Activated T-helper 2 cell treated with anti-CD3 and anti-CD28 coated beads, Interferon-gamma antibody, Interleukin-2, Interleukin-4, amounts not matched to agents 10 μg/mL and 5 μg/mL and 100 μg/mL, durations not matched to agents 14 hours and 24 hours and 36 hours (primary cell): ENCODE measurements at regions of chr18 and their contacts with region 1.

Region 1: DNA sequence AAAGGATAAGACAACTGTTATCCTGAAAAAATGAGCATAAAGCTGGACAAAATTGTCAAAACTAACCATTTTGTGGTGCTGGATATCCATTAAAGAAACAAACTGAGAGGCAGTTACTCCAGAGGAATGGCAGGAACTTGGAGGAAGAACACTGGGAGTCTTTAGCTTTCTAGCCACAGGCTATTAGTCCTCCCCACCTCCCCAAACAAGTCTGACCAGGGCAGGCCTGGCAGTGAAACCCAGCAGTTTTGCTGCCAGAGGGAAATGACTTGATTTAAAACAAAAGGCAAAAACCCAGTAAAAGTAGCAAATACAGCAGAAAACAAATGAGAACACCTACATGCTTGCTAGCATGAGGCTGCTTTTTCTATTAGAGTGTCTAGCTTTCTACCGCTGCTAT is 34.9 kb downstream of the OSBPL1A start:
- DNase-seq: no peak
- H3K4me3 Mint-ChIP-seq: no peak overlapping the region
- H3K27ac Mint-ChIP-seq: no peak overlapping the region
- H3K4me1 Mint-ChIP-seq: no peaks in the 10 kb centered on the region
- H3K27me3 Mint-ChIP-seq: peaks cover 18% of the 10 kb centered on the region

Region 2: DNA sequence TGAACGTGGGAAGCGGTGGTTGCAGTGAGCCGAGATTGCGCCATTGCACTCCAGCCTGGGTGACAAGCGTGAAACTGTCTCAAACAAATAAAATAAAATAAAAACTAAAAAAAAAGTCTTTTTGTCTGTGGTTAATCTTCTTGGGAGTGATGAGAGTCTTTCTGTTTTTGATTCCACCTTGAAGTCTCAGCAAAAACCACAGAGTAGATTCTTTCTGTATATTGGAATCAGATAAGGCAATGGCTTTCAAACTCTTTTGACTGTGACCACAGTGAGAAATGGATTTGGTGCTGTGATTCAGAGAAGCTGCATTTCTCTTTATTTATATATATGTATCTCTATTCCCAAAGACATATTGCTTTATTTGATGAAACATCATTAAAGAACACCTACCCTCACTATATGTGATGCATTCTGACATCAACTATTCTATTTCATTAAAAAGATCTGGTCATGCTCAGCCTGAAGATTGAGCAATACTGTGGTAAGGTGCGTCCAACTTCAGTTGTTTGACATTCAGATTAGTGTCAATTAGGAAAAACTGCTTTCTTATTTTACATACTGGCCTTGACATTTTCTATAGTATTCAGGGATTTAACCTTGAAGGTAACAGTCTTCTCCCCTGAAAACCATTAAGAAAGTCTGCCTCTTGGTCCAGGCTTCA is 113.3 kb after region 1 on chr18:
- intact Hi-C with region 1: no loop called
- DNase-seq: no peak
- H3K4me3 Mint-ChIP-seq: no peak overlapping the region
- H3K27ac Mint-ChIP-seq: no peak overlapping the region
- H3K4me1 Mint-ChIP-seq: peaks cover 12% of the 10 kb centered on the region
- H3K27me3 Mint-ChIP-seq: peaks cover 65% of the 10 kb centered on the region

Region 3: GRCh38 chr18:24731981-24732380 is 369.2 kb after region 1 on chr18:
- intact Hi-C with region 1: loop called (anchors 2 kb)
- DNase-seq: no peak
- H3K4me3 Mint-ChIP-seq: no peak overlapping the region
- H3K27ac Mint-ChIP-seq: no peak overlapping the region
- H3K4me1 Mint-ChIP-seq: no peaks in the 10 kb centered on the region
- H3K27me3 Mint-ChIP-seq: peaks cover 10% of the 10 kb centered on the region